Activated naive CD8-positive, alpha-beta T cell treated with anti-CD3 and anti-CD28 coated beads, Interleukin-2, amount 10 ng/mL, durations not matched to agents 7 days and 5 days (primary cell): ENCODE measurements at regions of chr19 and their contacts with region 1.

Region 1: GRCh38 chr19:2475702-2476450 is at the start of gene GADD45B:
- DNase-seq: peak; percentile 98
- ATAC-seq: peak; percentile 46
- H3K4me3 Mint-ChIP-seq: peak within 1 kb of the TSS; percentile 94
- H3K27ac Mint-ChIP-seq: peak within 1 kb of the TSS; percentile 87
- H3K4me1 Mint-ChIP-seq: peaks cover 10% of the 10 kb centered on the region
- H3K27me3 Mint-ChIP-seq: no peaks in the 10 kb centered on the region
- total RNA-seq, gene GADD45B: 83.1 to 85.4 TPM

Region 2: DNA sequence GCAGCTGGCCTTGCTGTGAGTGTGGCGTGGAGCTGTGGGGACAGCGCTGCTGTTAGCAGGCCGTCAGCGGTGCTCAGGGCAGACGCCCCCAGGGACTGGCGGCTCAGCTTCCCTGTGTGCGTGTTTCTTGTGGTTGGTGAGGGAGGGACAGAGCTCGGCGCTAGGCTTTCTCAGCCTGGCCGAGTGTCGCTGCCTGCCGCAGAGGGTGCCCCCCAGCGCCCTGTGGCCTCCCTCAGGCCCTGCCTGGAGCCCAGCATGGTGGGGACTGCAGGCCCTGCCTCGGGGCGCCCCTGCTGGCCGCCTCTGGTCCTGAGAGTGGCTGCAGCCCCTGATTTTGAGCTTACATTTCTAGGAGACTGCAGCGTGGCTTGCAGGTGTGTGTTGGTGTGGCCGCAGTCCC is 276.7 kb before region 1 on chr19:
- POLR2A ChIA-PET with region 1: no interaction called
- DNase-seq: no peak
- ATAC-seq: no peak
- H3K4me3 Mint-ChIP-seq: no peak overlapping the region
- H3K27ac Mint-ChIP-seq: no peak overlapping the region
- H3K4me1 Mint-ChIP-seq: peaks cover 2% of the 10 kb centered on the region
- H3K27me3 Mint-ChIP-seq: no peaks in the 10 kb centered on the region

Region 3: DNA sequence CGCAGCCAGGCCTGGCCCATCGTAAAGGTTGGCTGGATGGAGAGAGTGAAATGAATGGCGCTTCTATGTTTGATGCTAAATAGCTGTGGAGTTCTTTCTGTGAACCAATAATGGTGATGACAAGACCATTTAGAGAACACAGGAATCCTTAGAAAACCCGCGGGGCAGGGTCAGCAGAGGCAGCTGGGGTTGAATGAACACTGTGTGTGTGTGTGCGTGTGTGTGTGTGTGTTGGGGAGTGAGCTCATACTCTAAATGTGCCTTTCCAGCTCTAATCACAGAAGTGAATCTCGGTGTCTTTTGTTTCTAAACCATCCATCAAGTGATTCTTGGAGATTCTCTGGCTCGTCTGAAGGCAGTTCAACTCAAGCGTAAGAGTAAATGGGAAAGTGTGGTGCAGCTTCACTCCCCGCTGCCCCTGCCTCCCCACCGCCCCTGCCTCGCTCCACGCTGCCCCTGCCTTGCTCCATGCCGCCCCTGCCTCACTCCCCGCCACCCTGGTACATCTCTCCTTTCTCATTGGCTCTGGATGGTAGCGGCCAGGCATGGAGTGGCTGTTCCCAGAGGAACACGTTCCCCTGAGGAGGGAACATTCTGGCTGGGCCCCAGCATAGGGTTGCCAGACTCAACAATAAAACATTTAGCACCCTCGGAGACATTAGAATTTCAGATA is 94.6 kb before region 1 on chr19:
- POLR2A ChIA-PET with region 1: no interaction called
- DNase-seq: no peak
- ATAC-seq: no peak
- H3K4me3 Mint-ChIP-seq: no peak overlapping the region
- H3K27ac Mint-ChIP-seq: no peak overlapping the region
- H3K4me1 Mint-ChIP-seq: peaks cover 2% of the 10 kb centered on the region
- H3K27me3 Mint-ChIP-seq: peaks cover 2% of the 10 kb centered on the region

Region 4: GRCh38 chr19:2427429-2428320 is 48.2 kb before region 1 on chr19 and contains the start of gene TIMM13:
- POLR2A ChIA-PET with region 1: interaction called, 13 read pairs
- DNase-seq: peak; percentile 99
- ATAC-seq: peak; percentile 90
- H3K4me3 Mint-ChIP-seq: peak within 1 kb of the TSS; percentile 94
- H3K27ac Mint-ChIP-seq: peak within 1 kb of the TSS; percentile 90
- H3K4me1 Mint-ChIP-seq: peaks cover 7% of the 10 kb centered on the region
- H3K27me3 Mint-ChIP-seq: no peaks in the 10 kb centered on the region
- total RNA-seq, gene TIMM13: 46.5 to 48.5 TPM

Region 5: DNA sequence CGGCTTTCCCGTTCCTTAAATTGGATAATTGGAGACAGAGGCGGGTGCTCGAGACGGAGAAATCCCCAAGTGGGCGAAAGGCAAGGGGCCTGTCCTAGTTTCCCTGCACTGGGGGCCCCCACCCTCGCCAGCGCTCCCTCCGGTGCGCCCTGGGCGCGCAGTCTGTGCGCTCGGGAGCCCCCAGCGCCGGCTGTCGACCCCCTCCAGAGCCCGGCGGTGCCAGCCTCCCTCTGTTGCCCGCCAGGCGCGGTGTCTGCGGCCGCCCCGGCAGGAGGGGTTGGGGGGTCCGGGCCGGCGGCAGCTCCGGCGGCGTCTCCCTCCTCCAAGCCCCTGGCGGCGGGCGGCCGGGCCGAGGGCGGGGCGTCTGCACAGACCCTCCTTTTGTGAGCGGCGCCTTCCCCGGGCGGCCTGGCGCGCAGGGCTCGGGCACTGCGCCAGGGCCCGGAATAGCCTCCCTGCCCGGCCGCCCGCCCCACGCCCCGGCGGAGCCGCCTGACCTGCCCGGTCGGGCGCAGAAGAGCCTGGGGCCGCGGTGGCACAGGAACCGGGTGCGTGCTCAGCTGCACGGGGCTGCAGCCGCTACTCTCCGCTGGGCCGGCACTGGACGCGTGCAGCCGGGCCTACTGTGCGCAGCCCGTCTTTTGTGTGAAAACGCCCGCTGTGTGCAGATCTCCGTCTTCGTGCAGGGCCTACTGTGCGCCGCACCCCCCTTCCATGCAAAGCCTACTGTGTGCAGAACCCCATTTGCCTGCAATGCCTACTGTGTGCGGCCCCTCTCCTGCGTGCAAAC is 13.3 kb after region 1 on chr19:
- POLR2A ChIA-PET with region 1: interaction called, 63 read pairs
- DNase-seq: no peak
- ATAC-seq: peak; percentile 56
- H3K4me3 Mint-ChIP-seq: peak overlapping the region; percentile 60
- H3K27ac Mint-ChIP-seq: no peak overlapping the region
- H3K4me1 Mint-ChIP-seq: peaks cover 19% of the 10 kb centered on the region
- H3K27me3 Mint-ChIP-seq: peaks cover 48% of the 10 kb centered on the region

Region 6: GRCh38 chr19:2532252-2533071 is 56.6 kb after region 1 on chr19:
- POLR2A ChIA-PET with region 1: interaction called, 15 read pairs
- DNase-seq: no peak
- ATAC-seq: no peak
- H3K4me3 Mint-ChIP-seq: no peak overlapping the region
- H3K27ac Mint-ChIP-seq: no peak overlapping the region
- H3K4me1 Mint-ChIP-seq: peaks cover 12% of the 10 kb centered on the region
- H3K27me3 Mint-ChIP-seq: no peaks in the 10 kb centered on the region

Region 7: GRCh38 chr19:2561895-2562294 is 86.0 kb after region 1 on chr19:
- POLR2A ChIA-PET with region 1: interaction called, 102 read pairs
- DNase-seq: peak; percentile 73
- ATAC-seq: peak; percentile 92
- H3K4me3 Mint-ChIP-seq: peak overlapping the region; percentile 82
- H3K27ac Mint-ChIP-seq: peak overlapping the region; percentile 96
- H3K4me1 Mint-ChIP-seq: peaks cover 33% of the 10 kb centered on the region
- H3K27me3 Mint-ChIP-seq: no peaks in the 10 kb centered on the region

Region 8: DNA sequence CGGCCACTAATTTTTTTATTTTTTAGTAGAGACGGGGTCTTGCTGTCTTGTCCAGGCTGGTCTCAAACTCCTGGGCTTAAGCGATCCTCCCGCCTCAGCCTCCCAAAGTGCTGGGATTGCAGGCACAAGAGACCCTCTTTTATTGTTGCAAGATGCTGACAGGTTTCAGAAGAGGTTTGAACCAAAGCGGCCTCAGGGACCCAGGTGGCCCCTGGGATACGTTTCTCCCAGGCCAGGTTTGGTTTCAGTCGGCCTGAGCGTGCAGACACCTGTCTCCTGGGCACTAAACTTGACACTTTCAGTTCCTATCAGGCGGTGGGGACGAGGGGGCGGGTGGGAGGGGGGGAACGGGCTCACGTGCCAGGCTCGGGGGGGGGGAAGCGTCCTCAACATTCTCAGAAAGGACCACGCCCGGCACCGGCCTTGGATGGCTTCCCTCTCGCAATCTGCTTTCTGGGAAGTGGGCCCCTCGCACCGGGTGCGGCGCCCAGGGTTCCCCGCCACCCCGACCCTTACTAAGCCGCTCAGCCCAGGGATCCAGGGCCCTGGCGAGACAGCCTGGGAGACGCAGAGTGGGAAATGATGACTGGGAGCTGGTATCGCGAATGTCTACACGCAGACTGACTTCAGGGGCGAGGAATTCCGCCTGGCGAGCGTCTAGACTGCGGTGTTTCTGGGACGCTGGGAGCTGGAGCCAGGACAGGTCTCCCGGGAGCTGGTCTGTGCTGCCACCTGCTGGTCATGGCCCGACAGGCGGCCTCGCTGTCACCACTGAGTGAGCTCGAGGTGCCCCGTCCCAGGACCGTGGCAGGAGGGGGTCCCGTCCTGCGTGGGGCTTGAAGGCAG is 135.0 kb after region 1 on chr19:
- POLR2A ChIA-PET with region 1: interaction called, 207 read pairs
- DNase-seq: peak; percentile 94
- ATAC-seq: peak; percentile 75
- H3K4me3 Mint-ChIP-seq: peak overlapping the region; percentile 92
- H3K27ac Mint-ChIP-seq: peak overlapping the region; percentile 45
- H3K4me1 Mint-ChIP-seq: peaks cover 36% of the 10 kb centered on the region
- H3K27me3 Mint-ChIP-seq: peaks cover 9% of the 10 kb centered on the region

Region 9: DNA sequence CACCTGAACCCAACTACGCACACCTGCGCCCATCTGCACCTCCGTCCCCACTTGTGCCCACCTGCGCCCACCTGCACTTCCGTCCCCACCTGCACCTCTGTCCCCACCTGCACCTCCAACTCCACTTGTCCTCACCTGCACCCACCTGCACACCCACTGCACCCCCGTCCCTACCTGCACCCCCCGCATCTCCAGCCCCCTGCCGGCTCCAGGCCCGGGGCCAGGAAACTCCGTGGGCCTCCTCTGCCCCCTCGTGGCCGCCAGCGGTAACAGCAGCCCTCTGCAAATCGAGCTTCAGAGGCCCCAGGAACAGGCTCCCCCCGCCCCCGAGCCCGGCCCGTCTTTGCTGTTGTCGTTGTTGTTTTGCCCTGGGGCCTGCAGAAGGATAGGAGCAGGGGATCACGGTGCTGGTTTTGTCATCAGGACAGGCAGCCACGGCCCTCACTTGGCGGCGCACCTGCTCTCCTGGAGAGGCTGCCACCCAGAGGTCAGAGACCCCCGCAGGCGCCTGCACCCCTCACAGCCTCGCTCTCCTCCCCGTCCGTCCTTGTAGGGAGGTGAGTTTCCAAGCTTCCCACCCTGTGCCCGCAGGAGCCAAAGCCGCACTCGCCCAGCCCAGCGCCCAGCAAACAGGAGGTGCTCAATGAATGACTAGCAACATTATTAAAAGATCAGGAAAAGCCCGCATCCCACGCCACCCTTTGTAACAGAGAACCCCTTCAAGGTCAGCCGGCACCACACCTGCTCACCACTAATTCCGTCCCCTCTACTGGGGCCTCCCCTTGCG is 161.2 kb after region 1 on chr19:
- POLR2A ChIA-PET with region 1: interaction called, 29 read pairs
- DNase-seq: peak; percentile 85
- ATAC-seq: peak; percentile 82
- H3K4me3 Mint-ChIP-seq: peak overlapping the region; percentile 47
- H3K27ac Mint-ChIP-seq: no peak overlapping the region
- H3K4me1 Mint-ChIP-seq: peaks cover 2% of the 10 kb centered on the region
- H3K27me3 Mint-ChIP-seq: peaks cover 19% of the 10 kb centered on the region